Activated CD4-positive, alpha-beta T cell treated with anti-CD3 and anti-CD28 coated beads for 36 hours (primary cell): ENCODE measurements at regions of chr17 and their contacts with region 1.

Region 1: DNA sequence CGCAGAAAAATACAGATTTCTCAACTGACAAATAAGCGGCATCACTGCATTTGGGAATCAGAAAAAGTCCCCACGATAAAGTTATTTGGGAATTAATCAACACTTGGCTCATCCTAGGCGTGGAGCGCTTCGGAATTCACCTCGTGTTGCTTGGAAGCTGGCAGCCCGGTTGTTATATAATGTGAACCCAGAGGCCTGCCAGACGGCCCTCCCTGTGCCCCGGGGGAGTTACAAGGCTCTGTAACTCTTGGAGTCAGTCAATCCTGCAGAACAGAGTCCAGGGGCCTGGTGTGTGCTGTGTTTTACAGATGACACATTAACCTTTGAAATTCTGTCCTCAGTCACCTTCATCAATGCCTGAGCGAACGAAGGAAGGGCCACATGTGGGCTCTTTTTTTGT is 111.1 kb downstream of the PITPNC1 start:
- DNase-seq: no peak
- ATAC-seq: no peak
- H3K4me3 Mint-ChIP-seq: no peak overlapping the region
- H3K27ac Mint-ChIP-seq: peak overlapping the region; percentile 51
- H3K4me1 Mint-ChIP-seq: peaks cover 72% of the 10 kb centered on the region
- H3K27me3 Mint-ChIP-seq: no peaks in the 10 kb centered on the region

Region 2: DNA sequence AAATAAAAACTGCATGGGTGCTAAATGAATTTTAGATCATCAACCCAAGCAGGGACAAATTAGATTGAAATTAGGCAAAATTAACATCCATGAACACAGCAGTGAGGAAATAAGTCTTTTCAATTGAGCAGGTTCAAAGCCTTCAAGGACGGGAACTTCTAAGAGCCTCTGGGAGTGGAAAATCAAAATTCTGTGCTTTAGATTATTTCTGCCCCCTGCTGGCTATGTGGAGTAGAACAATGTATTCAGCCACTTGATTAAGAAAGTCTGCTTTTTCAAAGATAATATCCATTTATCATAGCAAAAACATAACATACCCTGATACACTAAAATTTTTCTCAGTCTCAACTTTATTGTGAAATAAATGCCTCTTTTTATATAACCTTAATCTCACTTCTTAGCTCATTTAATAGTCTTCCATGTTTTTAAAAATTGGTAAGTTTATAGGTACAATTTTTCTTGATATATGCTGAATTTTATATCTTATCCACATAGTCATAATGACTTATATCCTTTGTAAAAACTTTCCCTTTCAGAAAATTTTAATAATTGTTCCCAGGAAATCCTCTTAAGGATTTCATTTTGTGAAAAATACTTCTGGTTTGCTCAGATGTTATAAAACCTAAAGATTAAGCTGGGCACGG is 201.5 kb after region 1 on chr17:
- CTCF ChIA-PET with region 1: interaction called, 4 read pairs
- POLR2A ChIA-PET with region 1: no interaction called
- intact Hi-C with region 1: loop called in 1 of 2 experiments (anchors 10 kb)
- DNase-seq: peak; percentile 58
- ATAC-seq: no peak
- H3K4me3 Mint-ChIP-seq: no peak overlapping the region
- H3K27ac Mint-ChIP-seq: no peak overlapping the region
- H3K4me1 Mint-ChIP-seq: peaks cover 3% of the 10 kb centered on the region
- H3K27me3 Mint-ChIP-seq: no peaks in the 10 kb centered on the region